Common myeloid progenitor, CD34-positive (primary cell): ENCODE measurements at regions of chr1 and their contacts with region 1.

Region 1: GRCh38 chr1:27392096-27392777 is at the start of gene GPR3:
- DNase-seq: peak; percentile 93 to 96 (median 95)
- H3K4me3 ChIP-seq: peak within 1 kb of the TSS; percentile 19 to 78 (median 72)
- H3K27ac ChIP-seq: no peak within 1 kb of the TSS
- H3K4me1 ChIP-seq: peaks cover 2 to 24% (median 18%) of the 10 kb centered on the region in 4 experiments
- H3K27me3 ChIP-seq: no peaks in the 10 kb centered on the region

Region 2: GRCh38 chr1:27321813-27322577 is 70.2 kb before region 1 on chr1 and contains the start of gene TMEM222:
- CTCF ChIA-PET with region 1: interaction called, 11 read pairs
- POLR2A ChIA-PET with region 1: no interaction called
- DNase-seq: peak; percentile 98 to 99 (median 98)
- H3K4me3 ChIP-seq: peak within 1 kb of the TSS; percentile 74 to 100 (median 99)
- H3K27ac ChIP-seq: peak within 1 kb of the TSS; percentile 97 to 98
- H3K4me1 ChIP-seq: peaks cover 10 to 19% (median 14%) of the 10 kb centered on the region in 4 experiments
- H3K27me3 ChIP-seq: peaks cover 0 to 3% (median 2%) of the 10 kb centered on the region in 5 experiments

Region 3: DNA sequence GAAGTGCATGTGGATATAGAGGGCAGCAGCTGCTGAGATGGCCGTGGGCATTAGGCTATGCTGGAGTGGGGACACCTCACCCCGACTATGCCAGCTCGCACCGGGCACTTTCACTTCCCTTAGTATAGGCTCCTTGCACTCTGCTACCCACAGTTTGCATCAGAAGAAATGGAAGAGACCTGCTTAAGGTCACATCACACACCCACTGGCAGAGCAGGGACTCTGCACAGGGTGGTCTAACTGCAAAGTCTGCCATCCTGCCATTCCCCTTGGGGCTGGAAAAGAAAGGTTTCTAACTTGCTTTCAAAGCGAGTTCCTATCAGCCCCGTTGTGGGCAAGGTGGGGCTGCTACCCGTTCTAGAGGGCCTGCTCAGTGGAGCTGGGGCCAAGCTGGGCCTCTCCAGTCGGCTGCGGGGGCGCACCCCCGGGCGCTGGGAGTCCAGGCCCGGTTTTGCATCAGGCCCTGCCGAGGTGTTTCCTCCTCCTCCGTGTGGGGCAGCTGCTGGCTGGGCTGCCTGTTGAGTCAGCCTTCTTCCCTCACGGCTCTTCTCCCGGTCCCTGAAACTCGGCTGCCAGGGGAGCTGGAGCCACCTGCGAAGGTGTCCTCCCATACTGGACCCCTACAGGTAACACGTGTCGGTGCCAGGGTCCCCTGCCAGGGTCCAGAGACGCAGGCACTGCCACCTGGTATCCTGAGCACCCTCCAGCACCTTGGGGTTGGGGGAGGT is 50.5 kb before region 1 on chr1 and contains the start of gene SYTL1:
- CTCF ChIA-PET with region 1: interaction called, 11 read pairs
- POLR2A ChIA-PET with region 1: no interaction called
- DNase-seq: peak; percentile 68 to 88 (median 82)
- H3K4me3 ChIP-seq: peak within 1 kb of the TSS; percentile 56 to 93 (median 83)
- H3K27ac ChIP-seq: peak within 1 kb of the TSS; percentile 50 to 84
- H3K4me1 ChIP-seq: peaks cover 3 to 56% (median 36%) of the 10 kb centered on the region in 4 experiments
- H3K27me3 ChIP-seq: no peaks in the 10 kb centered on the region

Region 4: GRCh38 chr1:27357281-27358037 is 34.8 kb before region 1 on chr1:
- CTCF ChIA-PET with region 1: interaction called, 29 read pairs
- POLR2A ChIA-PET with region 1: interaction called, 3 read pairs
- DNase-seq: peak; percentile 75 to 85 (median 84)
- H3K4me3 ChIP-seq: peak overlapping the region in 4 of 7 experiments; percentile 19 to 73 (median 55)
- H3K27ac ChIP-seq: no peak overlapping the region
- H3K4me1 ChIP-seq: peaks cover 0 to 33% (median 19%) of the 10 kb centered on the region in 4 experiments
- H3K27me3 ChIP-seq: no peaks in the 10 kb centered on the region

Region 5: DNA sequence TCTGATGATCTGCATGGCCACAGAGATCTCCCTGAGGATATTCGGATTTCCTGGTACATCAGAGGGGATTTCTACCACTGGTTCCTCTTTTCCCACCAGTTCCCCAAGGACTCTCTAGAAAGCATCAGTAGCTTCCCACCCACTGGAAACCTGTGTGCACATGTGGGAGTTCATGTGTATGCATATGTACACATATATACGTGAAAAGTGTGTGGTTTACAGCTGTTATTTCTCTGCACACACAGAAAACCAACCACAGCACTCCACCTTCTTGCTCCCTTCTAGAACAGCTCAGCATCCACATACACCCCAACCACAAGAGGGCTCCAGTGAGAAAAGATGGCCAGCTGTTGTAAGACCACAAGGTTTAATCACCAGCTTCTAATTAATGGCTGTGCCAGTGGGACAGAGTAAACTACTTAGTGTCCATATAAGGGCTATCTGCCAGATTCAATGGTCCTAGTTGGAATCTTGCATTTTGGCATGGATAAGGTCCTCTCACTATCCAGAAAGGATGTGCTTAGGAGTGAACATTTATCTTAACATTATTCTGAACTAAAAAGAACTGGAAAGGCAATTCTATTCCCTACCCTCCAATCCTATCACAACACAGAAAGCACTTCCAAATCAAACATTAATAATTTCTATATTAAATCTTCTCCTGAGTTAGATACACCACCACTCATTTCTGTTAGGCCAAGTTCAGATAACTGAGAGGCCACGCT is 24.3 kb after region 1 on chr1:
- CTCF ChIA-PET with region 1: interaction called, 16 read pairs
- POLR2A ChIA-PET with region 1: no interaction called
- DNase-seq: peak; percentile 84 to 93 (median 92)
- H3K4me3 ChIP-seq: no peak overlapping the region
- H3K27ac ChIP-seq: peak overlapping the region in 1 of 2 experiments; percentile 17
- H3K4me1 ChIP-seq: peaks cover 4 to 29% (median 14%) of the 10 kb centered on the region in 4 experiments
- H3K27me3 ChIP-seq: no peaks in the 10 kb centered on the region

Region 6: DNA sequence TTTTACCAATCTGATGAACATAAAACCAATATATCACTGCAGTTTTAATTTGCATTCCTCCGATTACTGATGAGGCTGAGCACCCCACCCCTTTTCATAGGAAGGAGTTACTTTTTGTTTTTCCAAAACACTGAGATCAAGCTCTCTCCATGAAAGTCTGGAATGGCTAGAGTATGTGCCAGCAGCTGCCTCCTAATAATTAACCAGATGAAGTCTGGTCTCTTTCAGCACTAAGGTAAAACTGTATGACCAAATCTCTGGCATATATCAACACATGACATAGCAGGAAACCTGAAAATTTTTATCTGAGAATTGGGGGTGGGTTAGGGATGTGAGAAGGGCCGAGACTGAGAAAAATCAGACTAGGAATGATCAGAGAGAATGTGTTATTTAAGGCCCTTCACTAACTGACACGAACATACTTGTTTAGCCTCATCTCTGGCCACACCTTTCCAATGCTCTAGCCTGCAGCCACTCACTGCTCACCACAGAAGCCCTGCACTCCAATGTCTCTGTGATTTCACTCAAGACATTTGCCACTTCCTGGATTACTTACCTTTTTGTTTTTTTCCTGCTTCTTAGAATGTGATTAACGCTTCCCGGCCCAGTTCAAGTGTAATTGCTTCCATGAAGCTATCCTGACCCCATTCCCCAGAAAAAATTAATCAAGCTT is 63.0 kb after region 1 on chr1:
- CTCF ChIA-PET with region 1: no interaction called
- POLR2A ChIA-PET with region 1: no interaction called
- DNase-seq: peak in 2 of 3 donors; percentile 34 to 54
- H3K4me3 ChIP-seq: no peak overlapping the region
- H3K27ac ChIP-seq: no peak overlapping the region
- H3K4me1 ChIP-seq: peaks cover 7 to 26% (median 15%) of the 10 kb centered on the region in 4 experiments
- H3K27me3 ChIP-seq: no peaks in the 10 kb centered on the region